ENCODE measurements at regions of chr20 and their contacts with region 1.

Region 1: DNA sequence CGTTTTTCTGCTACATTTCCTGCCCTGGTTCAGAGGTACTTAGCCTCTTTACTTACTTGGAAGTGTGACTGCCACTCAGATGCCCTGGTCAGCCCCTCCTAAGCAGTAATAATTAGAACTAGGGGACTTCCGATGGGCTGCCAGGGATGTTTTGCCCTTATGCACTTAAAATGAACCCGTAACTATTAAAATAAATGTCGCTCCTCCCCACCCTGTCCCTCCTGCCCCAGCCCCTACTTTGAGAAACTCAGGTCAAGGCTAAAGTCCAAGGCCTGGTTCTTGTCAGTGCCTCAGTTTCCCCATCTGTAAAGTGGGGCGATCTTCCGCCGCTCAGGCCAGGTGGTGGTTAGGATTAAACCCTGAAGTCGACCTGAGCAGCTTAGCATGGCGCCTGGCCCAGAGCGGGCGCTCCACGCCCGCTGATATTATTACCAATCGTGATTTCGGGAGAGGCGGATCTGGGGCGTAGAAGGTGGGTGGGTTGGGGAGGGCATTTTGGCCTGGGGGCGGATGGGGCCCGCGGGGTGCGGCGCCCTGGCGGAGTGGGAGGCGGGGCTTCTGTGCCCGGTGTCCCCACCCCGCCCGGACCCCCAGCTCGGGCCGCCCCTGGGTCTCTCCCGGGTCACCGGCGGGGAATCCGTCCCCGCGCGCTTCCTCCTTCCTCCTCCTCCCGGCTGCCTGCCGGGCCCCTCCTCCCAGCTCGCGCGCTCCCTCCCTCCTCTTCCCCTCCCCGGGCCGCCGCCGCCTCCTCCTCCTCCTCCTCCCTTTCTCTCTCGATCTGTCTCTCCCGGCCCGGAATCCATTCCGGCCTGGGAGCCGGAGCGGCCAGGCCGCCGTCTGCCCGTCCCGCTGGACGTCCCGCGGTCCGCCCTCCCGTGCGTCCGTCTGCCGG is at the start of gene SRC:
- DNase-seq: peak; percentile 94
- H3K4me3 Mint-ChIP-seq: peak within 1 kb of the TSS; percentile 82
- H3K27ac Mint-ChIP-seq: peak within 1 kb of the TSS; percentile 94
- H3K4me1 Mint-ChIP-seq: peaks cover 77% of the 10 kb centered on the region
- H3K27me3 Mint-ChIP-seq: no peaks in the 10 kb centered on the region
- CTCF ChIP-seq: no peak
- total RNA-seq, gene SRC: 185 and 203 TPM in 2 replicates

Region 2: DNA sequence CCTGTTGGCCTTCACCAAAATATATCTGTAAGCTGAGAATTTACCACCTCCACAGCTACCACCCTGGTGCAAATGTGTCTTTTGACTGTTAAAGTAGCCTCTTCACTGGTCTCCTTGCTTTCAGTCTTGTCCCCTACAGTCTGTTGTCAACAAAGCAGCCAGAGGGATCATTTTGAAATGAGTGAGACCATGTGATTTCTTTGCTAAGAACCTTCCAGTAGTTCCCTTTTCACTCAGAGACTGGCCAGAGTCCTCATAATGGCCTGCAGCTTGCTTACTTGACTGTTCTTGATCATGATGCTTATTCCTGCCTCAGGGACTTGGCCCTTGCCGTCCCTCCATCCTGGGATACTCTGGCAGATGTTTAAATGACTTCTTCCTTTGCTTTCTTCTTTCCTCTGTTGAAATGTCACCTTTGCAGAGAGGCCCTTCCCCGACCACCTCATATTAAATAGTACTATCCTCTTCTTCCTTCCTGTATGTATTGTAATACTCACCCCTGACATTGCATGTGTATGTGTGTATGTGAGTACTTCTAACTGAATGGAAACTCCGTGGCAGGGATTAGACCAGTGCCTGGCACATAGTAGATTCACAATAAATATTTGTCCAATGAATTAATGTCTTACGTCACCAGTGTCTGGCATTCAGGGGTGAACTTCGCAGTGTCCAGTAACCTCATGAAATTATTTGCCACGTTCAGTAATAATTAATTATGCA is 51.2 kb before region 1 on chr20:
- CTCF ChIA-PET with region 1: interaction called, 5 read pairs
- intact Hi-C with region 1: loop called (anchors 2 kb)
- DNase-seq: no peak
- H3K4me3 Mint-ChIP-seq: no peak overlapping the region
- H3K27ac Mint-ChIP-seq: peak overlapping the region; percentile 1
- H3K4me1 Mint-ChIP-seq: peaks cover 40% of the 10 kb centered on the region
- H3K27me3 Mint-ChIP-seq: no peaks in the 10 kb centered on the region
- CTCF ChIP-seq: no peak

Region 3: GRCh38 chr20:37378785-37379598 is 33.4 kb after region 1 on chr20:
- CTCF ChIA-PET with region 1: interaction called, 7 read pairs
- intact Hi-C with region 1: loop called (anchors 2 kb)
- DNase-seq: peak; percentile 75
- H3K4me3 Mint-ChIP-seq: peak overlapping the region; percentile 46
- H3K27ac Mint-ChIP-seq: peak overlapping the region; percentile 95
- H3K4me1 Mint-ChIP-seq: peaks cover 74% of the 10 kb centered on the region
- H3K27me3 Mint-ChIP-seq: no peaks in the 10 kb centered on the region
- CTCF ChIP-seq: no peak